ENCODE measurements at regions of chr10 and their contacts with region 1.

Region 1: DNA sequence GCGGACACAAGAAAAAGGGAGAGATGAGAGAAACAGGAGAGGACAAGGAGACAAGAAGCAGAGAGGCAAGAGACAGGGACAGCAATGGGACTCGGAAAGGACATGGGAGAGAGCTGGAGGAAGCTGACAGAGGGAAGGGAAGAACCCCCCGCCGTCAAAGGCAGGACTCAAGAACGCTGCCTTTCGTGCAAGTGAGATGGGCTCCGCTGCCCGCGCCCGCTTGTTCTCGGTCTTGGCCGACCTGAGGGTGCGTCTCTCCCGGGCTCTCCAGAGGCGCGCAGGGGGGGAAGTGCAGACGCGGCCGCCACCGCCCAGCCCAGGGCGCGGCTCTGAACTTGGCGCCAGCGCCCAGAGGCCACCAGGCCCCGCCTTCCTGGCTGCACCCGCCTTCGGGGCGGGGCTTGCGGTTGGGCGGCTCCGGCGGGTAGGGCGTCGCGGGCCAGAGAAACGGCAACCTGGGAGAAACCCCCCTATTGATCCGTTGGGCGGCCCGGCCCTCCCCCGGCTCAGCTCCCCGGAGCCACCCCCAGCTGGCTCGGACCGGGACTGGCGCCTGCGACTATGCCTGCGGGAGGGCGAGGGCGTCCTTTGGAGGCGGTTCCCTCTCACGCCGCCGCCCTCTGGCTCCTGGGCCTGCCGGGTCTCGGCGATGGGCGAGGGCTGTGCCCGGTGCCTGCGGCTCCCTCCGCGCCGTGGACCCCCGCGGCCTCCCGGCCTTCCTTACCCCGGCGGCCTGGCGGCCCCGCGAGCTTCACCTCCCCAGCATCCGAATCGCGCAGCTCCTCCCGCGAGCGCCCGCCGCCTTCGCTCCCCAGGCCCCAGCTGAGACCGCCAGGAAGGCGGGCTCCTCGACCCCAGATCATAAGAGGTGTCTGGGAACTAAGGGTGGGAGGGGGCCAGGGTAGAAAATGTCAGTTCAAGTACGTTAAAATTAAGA is 2.2 kb upstream of the ANTXRL start:
- DNase-seq: peak; percentile 90
- CTCF ChIP-seq: no peak

Region 2: GRCh38 chr10:45044290-45044689 is 1240.3 kb before region 1 on chr10:
- in situ Hi-C with region 1: no loop called
- DNase-seq: no peak
- CTCF ChIP-seq: no peak

Region 3: DNA sequence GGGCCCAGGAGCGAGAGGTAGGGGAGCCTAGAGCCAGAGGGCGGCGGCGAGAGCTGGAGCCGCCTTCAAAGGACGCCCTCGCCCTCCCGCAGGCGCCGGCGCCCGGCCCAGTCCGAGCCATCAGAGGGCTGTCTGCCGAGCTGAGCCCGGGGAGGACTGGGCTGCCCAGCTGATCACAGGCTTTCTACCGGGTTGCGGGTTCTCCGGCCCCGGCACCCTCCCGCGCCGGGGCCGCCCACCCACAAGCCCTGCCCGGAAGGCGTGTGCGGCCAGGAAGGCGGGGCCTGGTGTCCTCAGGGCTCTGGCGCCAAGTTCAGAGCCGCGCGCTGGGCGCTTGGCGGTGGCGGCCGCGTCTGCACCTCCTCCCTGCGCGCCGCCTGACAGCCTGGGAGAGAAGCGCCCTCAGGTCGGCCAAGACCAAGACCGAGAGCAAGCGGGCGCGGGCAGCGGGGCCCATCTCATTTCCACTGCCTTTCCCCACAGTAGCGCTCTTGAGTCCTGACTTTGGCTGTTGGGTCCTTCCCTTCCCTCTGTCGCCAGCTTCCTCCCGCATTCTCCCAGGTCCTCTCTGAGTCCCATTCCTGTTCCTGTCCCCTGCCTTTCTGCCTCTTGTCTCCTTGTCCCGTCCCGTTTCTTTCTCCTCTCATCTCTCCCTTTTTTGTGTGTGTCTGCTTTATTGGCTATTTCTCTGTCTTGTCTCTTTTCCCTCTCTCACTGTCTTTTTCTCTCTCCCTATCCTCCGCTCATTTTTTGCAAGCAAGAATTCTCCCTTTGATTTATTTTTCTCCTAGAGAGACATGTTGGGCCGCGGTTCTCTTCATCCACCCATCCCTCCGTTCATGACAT is 177.9 kb before region 1 on chr10:
- in situ Hi-C with region 1: loop called (anchors 5 kb)
- DNase-seq: peak; percentile 54
- CTCF ChIP-seq: no peak

Region 4: GRCh38 chr10:47384148-47384921 is 1099.8 kb after region 1 on chr10 and contains the start of gene ZNF488:
- in situ Hi-C with region 1: loop called (anchors 10 kb)
- DNase-seq: peak; percentile 95
- CTCF ChIP-seq: no peak

Measured in GM13976 (cell line).